IMR-90 (cell line): ENCODE measurements at regions of chr2 and their contacts with region 1.

Region 1: DNA sequence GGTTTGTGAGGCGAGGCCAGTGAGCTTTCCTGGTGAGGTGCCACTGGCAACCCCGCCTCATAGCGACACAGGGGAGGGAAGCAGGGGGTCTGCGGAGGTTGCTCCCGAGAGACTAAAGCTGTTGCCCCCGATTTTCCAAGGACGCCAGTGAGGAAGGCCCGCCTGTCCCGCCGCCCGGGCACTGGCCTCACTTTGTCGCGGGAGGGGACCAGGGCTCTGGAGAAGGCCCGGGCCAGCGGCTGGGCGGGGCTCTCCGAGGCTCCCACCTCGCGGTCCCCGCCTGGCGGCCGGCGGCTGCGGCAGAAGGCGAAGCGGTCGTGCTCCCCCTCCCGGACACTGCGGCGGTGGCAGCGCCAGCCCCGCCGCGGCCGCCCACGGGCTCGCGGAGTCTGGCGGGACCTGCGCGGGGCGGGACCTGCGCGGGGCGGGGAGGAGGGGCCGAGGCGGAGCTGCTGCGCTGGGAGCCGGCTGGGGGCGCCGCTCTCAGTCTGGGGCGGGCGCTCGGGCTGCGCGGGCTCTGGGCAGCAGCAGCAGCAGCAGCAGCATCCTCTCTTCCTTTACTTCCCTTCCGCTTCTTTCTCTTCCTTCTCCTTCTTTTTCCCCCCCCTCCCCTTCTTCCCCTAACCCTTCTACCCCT is at the start of gene MAP2:
- DNase-seq: peak; percentile 60
- ATAC-seq: peak; percentile 99
- H3K4me3 ChIP-seq: peak within 1 kb of the TSS; percentile 43
- H3K27ac ChIP-seq: no peak within 1 kb of the TSS
- H3K4me1 ChIP-seq: peaks cover 3% of the 10 kb centered on the region; the same call in 1 of the 2 replicates
- H3K27me3 ChIP-seq: no peaks in the 10 kb centered on the region
- CTCF ChIP-seq: peak; percentile 99
- POLR2A ChIP-seq: no peak
- RAD21 ChIP-seq: peak; percentile 58
- total RNA-seq, gene MAP2: 0.28 and 0.36 TPM in 2 replicates

Region 2: GRCh38 chr2:209344349-209344748 is 79.3 kb before region 1 on chr2:
- CTCF ChIA-PET with region 1: no interaction called
- POLR2A ChIA-PET with region 1: no interaction called
- dilution Hi-C with region 1: no loop called
- in situ Hi-C with region 1: no loop called
- intact Hi-C with region 1: no loop called
- DNase-seq: no peak
- ATAC-seq: no peak
- H3K4me3 ChIP-seq: no peak overlapping the region
- H3K27ac ChIP-seq: no peak overlapping the region
- H3K4me1 ChIP-seq: no peaks in the 10 kb centered on the region
- H3K27me3 ChIP-seq: no peaks in the 10 kb centered on the region
- CTCF ChIP-seq: no peak
- POLR2A ChIP-seq: no peak
- RAD21 ChIP-seq: no peak

Region 3: GRCh38 chr2:209556354-209556961 is 132.8 kb after region 1 on chr2:
- CTCF ChIA-PET with region 1: interaction called, 18 read pairs
- POLR2A ChIA-PET with region 1: no interaction called
- dilution Hi-C with region 1: no loop called
- in situ Hi-C with region 1: loop called (anchors 5 kb)
- intact Hi-C with region 1: loop called (anchors 1 kb)
- DNase-seq: peak; percentile 59
- ATAC-seq: peak; percentile 61
- H3K4me3 ChIP-seq: no peak overlapping the region
- H3K27ac ChIP-seq: no peak overlapping the region
- H3K4me1 ChIP-seq: no peaks in the 10 kb centered on the region
- H3K27me3 ChIP-seq: no peaks in the 10 kb centered on the region
- CTCF ChIP-seq: peak; percentile 67
- POLR2A ChIP-seq: no peak
- RAD21 ChIP-seq: peak; percentile 78

Region 4: DNA sequence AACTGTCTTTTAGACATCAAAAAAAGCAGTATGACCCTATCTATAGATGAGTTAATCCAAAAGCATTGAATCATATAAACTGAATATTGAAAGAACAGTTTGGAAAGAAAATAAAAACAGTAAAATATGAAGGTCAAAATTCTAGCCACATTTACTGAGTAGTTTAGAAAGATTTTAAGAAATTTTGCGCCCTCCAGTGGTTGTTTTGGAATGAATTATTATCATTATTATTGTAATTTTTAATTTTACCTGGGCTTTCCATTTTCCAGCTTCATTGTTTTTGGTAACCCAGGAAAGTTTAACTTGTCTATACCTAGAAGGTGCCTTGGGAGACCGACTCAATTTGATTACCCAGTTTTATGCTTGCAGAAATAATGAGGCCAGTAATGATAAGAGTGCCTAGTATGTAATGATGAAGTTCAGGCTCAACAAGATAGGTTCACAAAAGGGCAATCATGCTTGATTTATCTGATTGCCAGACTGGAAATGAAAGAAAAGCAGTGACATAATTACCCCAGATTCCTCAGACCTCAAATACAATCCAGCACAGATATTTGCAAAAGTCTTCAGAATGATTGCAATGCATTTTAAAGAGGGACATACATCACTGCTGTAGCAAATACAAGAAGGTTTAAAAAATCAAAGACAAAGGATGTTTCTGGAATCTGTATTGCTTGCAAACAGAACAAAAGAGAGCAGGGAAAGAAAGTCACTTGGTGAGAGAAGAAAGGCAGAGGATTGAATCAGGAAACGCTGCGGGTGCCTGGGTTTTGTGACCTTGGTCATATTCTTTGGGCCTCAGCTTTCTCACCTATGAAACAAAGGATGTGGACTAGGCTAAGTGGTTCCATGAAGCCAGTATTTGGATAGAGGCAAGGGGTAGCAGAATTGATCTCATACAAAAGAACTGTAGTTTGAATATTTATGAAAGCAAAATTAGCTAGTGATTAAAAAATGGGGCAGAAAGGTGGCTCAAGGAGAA is 154.0 kb after region 1 on chr2:
- CTCF ChIA-PET with region 1: interaction called, 5 read pairs
- POLR2A ChIA-PET with region 1: no interaction called
- dilution Hi-C with region 1: no loop called
- in situ Hi-C with region 1: no loop called
- intact Hi-C with region 1: loop called (anchors 1 kb)
- DNase-seq: peak; percentile 6
- ATAC-seq: no peak
- H3K4me3 ChIP-seq: no peak overlapping the region
- H3K27ac ChIP-seq: no peak overlapping the region
- H3K4me1 ChIP-seq: no peaks in the 10 kb centered on the region
- H3K27me3 ChIP-seq: no peaks in the 10 kb centered on the region
- CTCF ChIP-seq: peak; percentile 52
- POLR2A ChIP-seq: no peak
- RAD21 ChIP-seq: peak; percentile 27; the same call in 1 of the 2 replicates